Breast epithelium (tissue), 4 donors: ENCODE measurements at regions of chr17 and their contacts with region 1.

Region 1: DNA sequence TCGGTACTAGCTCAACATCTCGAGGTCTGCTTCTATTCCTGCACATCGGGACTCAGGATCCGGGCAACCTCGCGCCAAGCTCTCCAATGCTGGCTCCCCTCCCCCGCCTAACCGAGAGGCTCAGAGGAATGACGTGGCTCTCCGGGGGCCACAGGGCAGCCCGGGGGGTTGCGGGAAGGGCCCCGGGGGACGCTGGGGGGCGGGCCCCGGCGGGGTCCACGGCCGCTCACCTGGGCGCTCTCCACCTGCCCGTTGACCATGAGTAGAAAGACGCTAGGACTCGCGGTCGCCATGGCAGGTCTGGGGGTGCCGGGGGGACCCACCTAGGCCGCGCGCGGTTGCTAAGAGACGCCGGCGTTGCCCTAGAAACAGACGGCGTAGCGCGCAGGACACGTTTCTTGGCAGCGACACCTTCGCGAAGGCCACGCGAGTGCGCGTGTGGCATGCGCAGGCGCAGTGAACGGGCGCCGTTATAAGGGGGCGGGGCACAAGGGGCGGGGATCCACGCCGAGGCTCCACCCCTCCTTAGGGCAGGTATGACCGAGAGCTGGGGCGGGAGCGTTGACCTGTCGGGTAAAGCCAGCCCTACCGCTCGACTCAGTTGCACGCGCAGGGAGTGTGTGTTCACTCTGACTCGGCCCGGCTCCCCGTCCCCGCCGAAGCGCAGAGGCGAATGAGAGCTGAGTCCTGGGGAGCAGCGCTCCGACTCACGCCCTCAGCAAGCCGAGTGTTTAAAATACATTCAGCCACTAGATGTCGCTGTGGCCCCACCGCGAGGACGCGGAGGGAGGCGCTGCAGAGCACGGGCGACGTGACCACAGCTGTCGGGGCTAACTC is at the start of gene B9D1:
- DNase-seq: peak; percentile 91 to 93
- H3K4me3 ChIP-seq: peak within 1 kb of the TSS; percentile 66 to 86 (median 85)
- H3K27ac ChIP-seq: peak within 1 kb of the TSS; percentile 92 to 96
- H3K4me1 ChIP-seq: peaks cover 0 to 10% of the 10 kb centered on the region in 2 donors
- H3K27me3 ChIP-seq: no peaks in the 10 kb centered on the region
- CTCF ChIP-seq: peak; percentile 97 to 99 (median 99)
- POLR2A ChIP-seq: no peak
- total RNA-seq, gene B9D1: 14.4 to 29.2 (median 28.4) TPM

Region 2: DNA sequence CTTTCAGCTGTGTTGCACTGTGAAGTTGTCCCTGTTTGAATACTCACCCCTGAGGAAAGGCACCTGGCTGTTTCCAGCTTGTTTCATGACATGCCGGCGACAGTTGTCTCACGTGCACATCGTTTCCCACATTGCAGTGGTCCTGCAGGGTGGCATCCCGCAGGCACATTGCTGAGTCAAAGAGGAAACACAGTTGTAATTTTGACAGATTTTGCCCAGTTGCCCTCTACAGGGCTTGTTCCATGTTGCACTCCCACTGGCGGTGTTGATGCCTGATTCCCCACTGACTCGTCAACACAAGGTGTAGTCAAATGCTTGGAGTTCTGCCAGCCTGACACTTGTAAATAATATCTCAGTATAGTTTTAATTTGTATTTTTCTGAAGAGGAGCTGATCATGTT is 101.5 kb before region 1 on chr17:
- intact Hi-C with region 1: loop called (anchors 5 kb)
- DNase-seq: no peak
- H3K4me3 ChIP-seq: no peak overlapping the region
- H3K27ac ChIP-seq: no peak overlapping the region
- H3K4me1 ChIP-seq: no peaks in the 10 kb centered on the region
- H3K27me3 ChIP-seq: no peaks in the 10 kb centered on the region
- CTCF ChIP-seq: no peak
- POLR2A ChIP-seq: no peak

Region 3: DNA sequence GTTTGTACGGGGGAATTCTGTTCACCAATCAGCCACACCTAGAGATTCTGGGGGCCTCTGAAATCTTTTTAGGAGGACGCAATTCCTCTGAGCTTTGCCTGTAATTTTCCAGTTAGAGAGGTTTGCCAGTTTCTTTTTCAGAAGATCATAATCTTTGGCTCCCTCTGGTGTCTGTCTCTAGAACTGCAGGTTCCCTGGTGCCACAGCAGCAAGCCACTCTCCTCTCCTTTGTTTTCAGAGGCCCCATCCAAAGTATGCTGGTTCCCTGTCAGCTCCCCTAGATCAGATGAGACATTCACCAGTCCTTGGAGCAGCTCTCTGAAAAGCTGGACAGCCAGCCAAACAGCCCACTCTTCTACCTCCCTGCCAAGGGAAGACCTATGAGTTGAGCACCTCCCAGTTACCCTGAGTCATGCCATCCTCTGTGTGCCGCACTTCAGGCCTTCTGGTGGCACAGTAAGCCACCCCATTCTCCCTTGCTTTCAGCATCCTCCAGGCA is 84.6 kb after region 1 on chr17:
- intact Hi-C with region 1: loop called (anchors 5 kb)
- DNase-seq: peak; percentile 60 to 68
- H3K4me3 ChIP-seq: no peak overlapping the region
- H3K27ac ChIP-seq: peak overlapping the region; percentile 82 to 91
- H3K4me1 ChIP-seq: peaks cover 5 to 6% of the 10 kb centered on the region in 2 donors
- H3K27me3 ChIP-seq: no peaks in the 10 kb centered on the region
- CTCF ChIP-seq: peak; percentile 95 to 99 (median 98)
- POLR2A ChIP-seq: no peak

Region 4: GRCh38 chr17:19650826-19651225 is 288.3 kb after region 1 on chr17:
- intact Hi-C with region 1: loop called (anchors 10 kb)
- DNase-seq: no peak
- H3K4me3 ChIP-seq: peak overlapping the region in 2 of 3 donors; percentile 65 to 88
- H3K27ac ChIP-seq: peak overlapping the region in 1 of 2 donors; percentile 49
- H3K4me1 ChIP-seq: peaks cover 11 to 18% of the 10 kb centered on the region in 2 donors
- H3K27me3 ChIP-seq: no peaks in the 10 kb centered on the region
- CTCF ChIP-seq: no peak
- POLR2A ChIP-seq: no peak